ENCODE measurements at regions of chr1 and their contacts with region 1.

Region 1: GRCh38 chr1:58857680-58858673 is 74.1 kb upstream of the JUN start:
- DNase-seq: peak; percentile 67
- ATAC-seq: peak; percentile 92
- H3K4me3 ChIP-seq: no peak overlapping the region
- H3K27ac ChIP-seq: peak overlapping the region; percentile 27; the same call in 1 of the 2 replicates
- H3K4me1 ChIP-seq: peaks cover 34% of the 10 kb centered on the region
- H3K27me3 ChIP-seq: no peaks in the 10 kb centered on the region
- CTCF ChIP-seq: no peak
- EP300 ChIP-seq: peak in 1 of 2 experiments; percentile 40; a peak in 1 of 4 replicates
- POLR2A ChIP-seq: no peak
- RAD21 ChIP-seq: no peak

Region 2: DNA sequence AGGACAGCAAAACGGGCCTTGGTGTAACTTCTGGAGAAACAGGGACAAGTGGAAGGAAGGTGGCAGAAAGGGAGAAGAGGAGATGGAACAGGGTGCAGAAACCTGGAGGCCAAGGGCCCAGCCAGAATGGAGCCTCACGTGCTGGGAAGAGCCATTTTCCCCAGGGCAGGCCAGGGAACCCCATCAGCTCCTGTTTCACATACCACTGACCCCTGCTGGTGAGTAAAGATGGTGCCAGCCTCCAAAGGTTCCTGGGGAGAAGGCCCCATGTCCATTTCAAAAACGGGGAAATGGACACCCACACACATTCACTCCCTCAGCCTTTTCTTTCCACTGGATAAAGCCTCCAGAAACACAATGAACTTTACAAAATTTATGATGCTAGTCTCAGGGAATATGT is 16.5 kb before region 1 on chr1:
- CTCF ChIA-PET with region 1: interaction called, 16 read pairs
- POLR2A ChIA-PET with region 1: interaction called, 3 read pairs
- RAD21 ChIA-PET with region 1: no interaction called
- SMC1A ChIA-PET with region 1: interaction called, 11 read pairs
- in situ Hi-C with region 1: no loop called
- intact Hi-C with region 1: no loop called
- DNase-seq: no peak
- ATAC-seq: peak; percentile 58
- H3K4me3 ChIP-seq: no peak overlapping the region
- H3K27ac ChIP-seq: no peak overlapping the region
- H3K4me1 ChIP-seq: no peaks in the 10 kb centered on the region
- H3K27me3 ChIP-seq: no peaks in the 10 kb centered on the region
- CTCF ChIP-seq: peak; percentile 25 to 51 (median 41); a peak in 5 of 6 replicates
- EP300 ChIP-seq: no peak
- POLR2A ChIP-seq: no peak
- RAD21 ChIP-seq: peak; percentile 45; the same call in 1 of the 2 replicates

Region 3: GRCh38 chr1:58890113-58890512 is 32.1 kb after region 1 on chr1:
- CTCF ChIA-PET with region 1: interaction called, 3 read pairs
- POLR2A ChIA-PET with region 1: no interaction called
- RAD21 ChIA-PET with region 1: no interaction called
- SMC1A ChIA-PET with region 1: interaction called, 10 read pairs
- in situ Hi-C with region 1: no loop called
- intact Hi-C with region 1: no loop called
- DNase-seq: no peak
- ATAC-seq: no peak
- H3K4me3 ChIP-seq: no peak overlapping the region
- H3K27ac ChIP-seq: no peak overlapping the region
- H3K4me1 ChIP-seq: no peaks in the 10 kb centered on the region
- H3K27me3 ChIP-seq: no peaks in the 10 kb centered on the region; a peak in 1 of 4 replicates
- CTCF ChIP-seq: no peak
- EP300 ChIP-seq: no peak
- POLR2A ChIP-seq: no peak
- RAD21 ChIP-seq: no peak

Region 4: DNA sequence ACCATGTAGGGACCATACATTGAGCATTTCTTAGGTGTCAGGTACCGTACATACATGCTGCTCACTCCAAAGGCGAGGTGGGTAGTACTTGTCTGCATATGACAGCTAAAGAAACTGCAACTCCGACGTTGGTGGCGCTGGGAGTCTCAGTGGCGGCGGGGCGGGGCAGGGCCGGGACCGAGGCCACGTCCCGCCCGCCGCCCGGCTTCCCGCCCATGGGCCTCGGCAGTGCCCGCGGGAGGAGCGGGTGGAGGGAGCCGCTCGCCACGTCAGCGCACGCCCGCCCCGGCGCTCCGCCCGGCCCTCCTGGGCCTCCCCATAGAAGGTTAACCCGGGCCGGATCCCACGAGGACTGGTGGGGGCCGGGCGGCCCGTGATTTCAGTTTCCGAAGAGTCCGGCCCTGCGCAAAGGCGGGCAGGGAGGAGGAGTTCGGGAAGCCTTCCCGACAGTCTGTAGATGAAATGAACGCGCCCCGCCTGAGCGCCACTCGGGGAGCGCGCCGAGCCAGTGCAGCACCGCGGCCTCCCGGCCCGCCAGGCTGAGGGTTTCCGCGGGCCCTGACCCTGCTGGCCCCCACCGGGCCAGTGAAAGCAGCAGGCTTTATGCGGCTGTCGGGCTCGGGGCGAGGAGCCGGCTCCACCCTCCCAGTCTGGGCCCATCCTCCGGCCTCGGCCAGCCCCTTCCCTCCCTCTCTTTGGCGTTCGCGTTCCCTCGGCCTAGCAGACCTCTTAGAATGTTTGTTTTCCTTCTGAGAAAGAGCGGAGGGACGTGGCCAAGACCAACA is 45.7 kb after region 1 on chr1:
- CTCF ChIA-PET with region 1: interaction called, 3 read pairs
- POLR2A ChIA-PET with region 1: interaction called, 5 read pairs
- RAD21 ChIA-PET with region 1: interaction called, 6 read pairs
- SMC1A ChIA-PET with region 1: interaction called, 10 read pairs
- in situ Hi-C with region 1: no loop called
- intact Hi-C with region 1: loop called (anchors 1 kb)
- DNase-seq: peak; percentile 59
- ATAC-seq: peak; percentile 96
- H3K4me3 ChIP-seq: peak overlapping the region; percentile 58; the same call in 1 of the 2 replicates
- H3K27ac ChIP-seq: peak overlapping the region; percentile 60
- H3K4me1 ChIP-seq: peaks cover 9% of the 10 kb centered on the region; the same call in 1 of the 2 replicates
- H3K27me3 ChIP-seq: no peaks in the 10 kb centered on the region
- CTCF ChIP-seq: no peak
- EP300 ChIP-seq: no peak
- POLR2A ChIP-seq: peak; percentile 81
- RAD21 ChIP-seq: no peak

Region 5: DNA sequence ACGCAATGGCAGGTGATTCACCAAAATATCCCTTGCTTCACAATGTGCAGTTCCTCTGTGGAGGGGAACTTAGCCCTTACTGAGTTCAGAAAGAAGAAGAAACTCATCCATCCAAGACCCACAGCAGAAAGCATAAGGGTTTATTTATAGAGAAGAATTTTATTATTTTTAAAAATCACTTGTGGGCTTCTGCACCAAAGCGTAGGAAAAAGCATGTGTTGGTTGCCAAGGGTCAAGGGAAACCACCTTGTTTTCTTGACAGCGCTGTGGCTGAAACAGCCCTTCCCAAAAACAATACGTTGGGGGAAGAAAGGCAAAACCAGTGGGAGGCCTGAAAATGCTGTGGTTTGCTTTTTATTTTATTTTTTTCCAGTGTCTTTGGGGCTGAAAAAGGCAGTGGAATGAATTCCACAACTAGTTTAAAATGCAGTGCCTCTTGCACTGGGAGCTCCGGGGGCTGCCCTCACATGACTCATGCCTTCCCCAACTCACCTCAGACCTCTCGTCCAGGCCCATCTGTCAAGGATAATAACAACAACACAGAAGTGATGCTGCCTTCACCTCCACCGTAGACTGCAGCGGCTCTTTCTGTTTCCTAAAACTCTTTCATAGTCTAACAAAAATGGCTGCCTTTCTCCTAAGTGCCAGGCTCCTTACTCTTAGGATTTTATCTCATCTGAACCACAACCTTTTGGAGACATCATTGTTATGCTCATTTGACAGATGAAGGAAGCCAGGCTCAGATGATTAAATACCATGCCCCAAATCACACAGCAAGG is 150.0 kb after region 1 on chr1:
- CTCF ChIA-PET with region 1: no interaction called
- POLR2A ChIA-PET with region 1: interaction called, 5 read pairs
- RAD21 ChIA-PET with region 1: interaction called, 9 read pairs
- SMC1A ChIA-PET with region 1: interaction called, 9 read pairs
- in situ Hi-C with region 1: no loop called
- intact Hi-C with region 1: loop called (anchors 5 kb)
- DNase-seq: no peak
- ATAC-seq: peak; percentile 71
- H3K4me3 ChIP-seq: peak overlapping the region; percentile 9; the same call in 1 of the 2 replicates
- H3K27ac ChIP-seq: peak overlapping the region; percentile 15
- H3K4me1 ChIP-seq: peaks cover 55% of the 10 kb centered on the region
- H3K27me3 ChIP-seq: no peaks in the 10 kb centered on the region
- CTCF ChIP-seq: no peak
- EP300 ChIP-seq: peak; percentile 14 to 63; a peak in 3 of 4 replicates
- POLR2A ChIP-seq: no peak
- RAD21 ChIP-seq: no peak

Measured in GM12878 (cell line).